Left cardiac atrium (tissue), 4 donors: ENCODE measurements at regions of chr16 and their contacts with region 1.

Region 1: DNA sequence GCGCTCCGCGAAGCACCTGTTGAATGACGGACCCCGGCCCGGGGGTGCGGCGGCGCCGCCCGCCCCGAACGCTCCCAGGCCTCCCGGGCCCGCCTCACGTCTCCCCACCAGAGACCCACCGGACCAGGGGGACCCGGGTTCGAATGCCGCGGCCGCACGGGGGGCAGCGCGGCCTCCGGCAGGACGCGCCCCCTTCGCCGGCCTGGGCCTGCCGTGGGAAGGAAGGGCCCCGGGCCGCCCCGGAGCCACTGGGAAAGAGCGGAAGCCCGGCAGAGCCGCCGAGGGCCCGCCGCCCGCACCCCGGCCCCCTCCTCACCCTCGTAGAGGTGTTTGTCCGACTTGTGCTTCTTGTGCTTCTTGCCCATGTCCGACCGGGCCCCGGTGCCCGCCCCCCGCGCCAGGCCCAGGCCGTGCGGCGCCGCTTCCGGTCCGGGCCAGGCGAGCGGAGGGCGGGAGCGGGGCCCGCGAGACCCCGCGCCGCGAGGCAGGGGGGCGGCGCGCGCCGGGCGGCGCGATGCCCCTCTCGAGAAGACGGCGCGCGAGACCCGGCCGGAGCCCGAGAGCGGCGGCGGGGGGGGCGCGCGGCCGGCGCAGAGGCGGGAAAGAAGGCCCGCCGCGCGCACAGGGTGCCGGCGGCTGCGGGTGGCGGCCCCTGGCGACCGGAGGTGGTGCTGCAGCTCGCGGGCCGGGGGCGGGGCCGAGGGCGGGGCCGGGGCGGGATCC is at the start of gene BRD7:
- DNase-seq: peak; percentile 60
- ATAC-seq: peak; percentile 80 to 82
- total RNA-seq, gene BRD7: 41.7 to 43.4 TPM

Region 2: DNA sequence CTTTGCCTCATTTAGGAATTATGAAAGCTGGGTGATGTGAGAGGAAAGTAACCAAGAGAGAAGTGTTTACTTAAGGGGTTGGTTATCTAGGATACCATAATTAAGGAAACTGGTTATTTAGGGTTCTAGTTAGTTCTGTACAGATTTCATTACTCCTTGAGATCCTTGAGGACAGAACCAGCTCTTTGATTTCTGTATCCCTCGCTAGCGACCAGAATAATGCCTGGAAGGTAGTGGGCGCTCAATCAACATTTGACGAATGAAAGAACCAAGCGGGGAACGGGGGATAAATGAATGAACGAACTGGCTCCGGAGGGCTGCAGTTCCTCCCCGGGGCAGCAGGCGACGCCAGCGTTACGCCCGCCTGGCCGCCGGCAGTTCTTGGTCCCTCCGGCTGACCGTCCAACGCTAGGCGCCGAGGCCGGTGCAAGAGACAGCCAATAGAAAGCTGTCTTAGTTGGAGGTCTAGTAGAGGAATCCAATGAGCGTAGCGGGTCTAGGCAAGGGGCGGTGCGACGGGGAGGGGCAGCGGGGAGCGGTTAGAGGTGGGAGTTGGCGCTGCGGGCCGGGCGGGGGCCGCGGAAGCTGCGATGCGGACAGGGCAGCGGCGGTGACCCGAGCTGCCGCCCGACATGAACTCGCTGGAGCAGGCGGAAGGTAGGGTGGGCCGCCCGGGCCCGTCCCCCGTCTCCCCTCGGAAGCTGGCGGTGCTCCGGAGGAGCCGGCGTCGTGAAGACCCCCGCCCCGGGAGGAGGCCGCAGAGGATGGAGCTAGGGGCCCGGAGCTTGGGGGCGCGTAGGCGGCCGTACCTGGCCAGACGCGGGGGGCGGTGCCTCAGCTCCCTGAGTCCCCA is 343.7 kb before region 1 on chr16 and contains the start of gene CNEP1R1:
- intact Hi-C with region 1: loop called in 1 of 2 experiments (anchors 10 kb)
- DNase-seq: peak; percentile 94
- ATAC-seq: peak; percentile 100
- total RNA-seq, gene CNEP1R1: 16.2 to 17.1 TPM

Region 3: GRCh38 chr16:50202926-50203624 is 165.5 kb before region 1 on chr16:
- intact Hi-C with region 1: no loop called
- DNase-seq: no peak
- ATAC-seq: peak; percentile 58 to 84

Region 4: GRCh38 chr16:50309527-50310307 is 58.9 kb before region 1 on chr16:
- intact Hi-C with region 1: no loop called
- DNase-seq: no peak
- ATAC-seq: no peak

Region 5: DNA sequence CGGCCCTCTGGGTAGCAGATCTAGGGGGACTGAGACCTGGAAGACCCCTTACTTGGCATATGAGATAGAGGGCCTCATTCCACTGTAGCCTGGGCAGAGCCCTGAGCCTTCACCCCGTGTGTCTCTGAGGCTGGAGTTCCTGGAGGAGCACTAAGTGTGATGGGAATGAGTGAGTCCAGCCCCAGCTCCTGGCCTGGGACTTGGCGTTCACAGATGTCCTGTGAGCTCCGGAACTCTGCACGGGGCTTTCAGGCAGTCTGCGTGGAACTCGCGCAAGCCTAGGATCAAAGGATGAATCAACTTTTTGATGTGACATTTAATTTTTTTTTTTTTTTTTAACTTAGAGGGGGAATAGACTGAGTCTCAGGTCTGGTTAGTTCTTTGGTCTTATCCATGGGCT is 181.5 kb after region 1 on chr16:
- intact Hi-C with region 1: loop called in 1 of 2 experiments (anchors 10 kb)
- DNase-seq: no peak
- ATAC-seq: no peak

Region 6: GRCh38 chr16:50644729-50645128 is 276.2 kb after region 1 on chr16:
- intact Hi-C with region 1: loop called in 1 of 2 experiments (anchors 10 kb)
- DNase-seq: no peak
- ATAC-seq: peak; percentile 72 to 74

Region 7: DNA sequence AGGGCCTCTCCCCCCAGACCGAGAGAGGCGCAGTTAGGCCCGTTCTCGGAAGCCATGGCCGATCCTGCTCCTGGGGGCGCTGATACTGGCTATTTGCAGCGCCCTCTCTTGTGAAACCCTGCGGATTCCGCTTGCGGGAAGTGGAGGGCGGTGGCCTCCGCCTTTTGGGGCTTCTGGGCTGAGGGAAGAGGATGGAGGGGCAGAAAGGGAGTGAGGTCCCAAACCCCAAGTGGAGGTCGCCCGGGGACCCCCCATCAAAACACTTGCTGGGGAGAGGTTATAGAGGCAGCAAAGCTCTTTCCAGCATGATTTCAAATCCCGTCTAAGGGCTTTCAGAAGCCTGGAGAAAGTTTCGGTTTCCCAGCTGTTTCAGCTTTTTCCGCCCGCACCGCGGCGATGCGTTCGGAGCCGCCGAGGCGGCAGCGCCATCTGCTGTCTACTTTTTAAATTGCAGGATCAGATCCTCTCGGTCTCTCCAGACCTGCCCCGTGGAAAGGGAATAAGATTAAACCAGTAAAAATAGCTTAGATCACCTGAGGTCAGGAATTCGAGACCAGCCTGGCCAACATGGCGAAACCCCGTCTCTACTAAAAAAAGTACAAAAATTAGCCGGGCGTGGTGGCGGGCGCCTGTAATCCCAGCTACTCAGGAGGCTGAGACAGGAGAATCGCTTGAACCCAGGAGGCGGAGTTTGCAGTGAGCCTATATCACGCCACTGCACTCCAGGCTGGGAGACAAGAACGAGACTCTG is 296.7 kb after region 1 on chr16:
- intact Hi-C with region 1: loop called in 1 of 2 experiments (anchors 1 kb)
- DNase-seq: peak; percentile 80
- ATAC-seq: peak; percentile 87 to 88